Left colon (tissue), 2 donors: ENCODE measurements at regions of chr1 and their contacts with region 1.

Region 1: GRCh38 chr1:6794164-6794563 is 8.9 kb downstream of the CAMTA1 start:
- DNase-seq: no peak
- ATAC-seq: peak; percentile 63

Region 2: DNA sequence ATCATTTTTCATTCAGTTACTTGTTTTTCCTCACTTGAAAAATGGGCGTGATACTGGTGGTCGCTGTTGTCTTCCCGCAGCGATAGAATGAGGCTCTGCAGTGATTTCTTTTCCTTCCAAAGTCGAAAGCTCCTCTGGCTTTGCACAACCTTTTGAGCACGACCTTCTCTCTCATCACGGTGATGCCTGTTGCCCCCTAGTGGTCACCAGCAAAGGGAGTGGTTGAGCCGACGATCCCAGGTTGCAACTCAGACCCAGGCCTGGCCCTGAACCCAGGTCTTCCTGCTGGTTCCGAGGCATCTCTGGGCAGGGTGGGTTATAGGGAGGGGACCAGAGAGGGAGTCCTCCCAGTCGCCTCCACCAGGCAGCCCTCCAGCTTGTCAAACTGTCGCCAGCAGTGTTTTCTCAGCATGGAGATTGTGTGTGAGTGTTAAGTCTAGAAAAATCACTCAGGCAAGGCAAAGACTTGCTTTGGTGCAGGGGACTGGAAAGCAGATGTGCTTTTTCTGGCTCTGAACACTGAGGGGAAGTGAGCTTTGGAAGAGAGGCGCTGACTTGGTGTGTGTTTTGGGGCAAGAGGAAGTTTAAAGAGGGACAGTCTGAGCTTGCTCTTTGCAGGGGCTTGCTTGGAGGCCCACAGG is 276.3 kb after region 1 on chr1:
- intact Hi-C with region 1: loop called (anchors 5 to 10 kb)
- DNase-seq: peak; percentile 50 to 62
- ATAC-seq: peak; percentile 84